ENCODE measurements at regions of chr12 and their contacts with region 1.

Region 1: GRCh38 chr12:54191550-54192022 is 2.8 kb upstream of the SMUG1 start:
- DNase-seq: peak; percentile 84
- H3K4me3 Mint-ChIP-seq: no peak overlapping the region
- H3K27ac Mint-ChIP-seq: no peak overlapping the region
- H3K4me1 Mint-ChIP-seq: peaks cover 25% of the 10 kb centered on the region
- H3K27me3 Mint-ChIP-seq: peaks cover 53% of the 10 kb centered on the region

Region 2: DNA sequence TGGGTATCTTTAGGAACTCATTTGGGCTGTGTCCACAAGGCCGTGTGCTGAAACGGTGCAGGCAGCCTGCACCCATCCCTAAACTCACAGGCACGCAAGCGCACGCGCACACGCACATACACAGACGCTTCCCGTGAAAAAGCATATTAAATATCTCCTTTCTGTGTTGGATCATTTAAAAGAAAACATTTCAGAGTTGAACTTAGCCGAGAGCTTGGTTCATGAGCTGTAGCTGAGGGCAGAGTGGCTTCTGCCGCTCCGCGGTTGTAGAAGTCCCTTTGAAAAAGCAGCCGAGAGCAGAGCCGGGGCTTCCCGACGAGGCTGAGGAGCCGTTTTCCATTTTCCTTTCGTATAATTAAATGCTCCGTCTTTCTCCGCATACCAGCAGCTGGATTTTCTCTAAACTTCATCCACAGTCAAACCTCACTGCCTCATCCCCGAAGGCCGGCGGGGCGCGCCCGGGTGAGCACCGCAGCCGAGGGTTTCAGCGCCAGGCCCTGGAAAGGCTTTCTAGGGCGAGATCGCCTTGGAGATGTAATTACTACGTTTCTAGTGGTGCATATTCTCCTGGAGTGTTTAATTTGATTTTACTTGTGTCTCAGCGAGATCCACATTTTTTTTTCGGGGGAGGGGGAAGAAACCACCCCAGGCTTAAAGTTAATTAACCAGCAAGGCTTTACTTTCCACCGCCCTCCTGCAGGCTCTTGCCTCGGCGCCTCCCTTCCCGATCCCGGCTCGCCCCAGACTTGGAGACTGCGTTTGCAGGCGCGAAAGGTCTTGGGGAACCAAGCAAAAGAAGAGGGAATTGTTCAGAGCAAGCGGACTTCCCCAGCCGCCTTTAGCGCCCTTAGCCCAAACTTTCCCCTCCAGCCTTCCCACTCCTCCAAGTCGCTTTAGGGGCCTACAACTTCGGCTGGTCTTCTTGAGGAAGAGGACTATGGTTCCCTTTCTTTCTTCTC is 255.9 kb before region 1 on chr12:
- CTCF ChIA-PET with region 1: no interaction called
- POLR2A ChIA-PET with region 1: no interaction called
- DNase-seq: no peak
- H3K4me3 Mint-ChIP-seq: no peak overlapping the region
- H3K27ac Mint-ChIP-seq: peak overlapping the region; percentile 36
- H3K4me1 Mint-ChIP-seq: no peaks in the 10 kb centered on the region
- H3K27me3 Mint-ChIP-seq: peaks cover 91% of the 10 kb centered on the region

Region 3: GRCh38 chr12:54207484-54208294 is 16.1 kb after region 1 on chr12:
- CTCF ChIA-PET with region 1: interaction called, 27 read pairs
- POLR2A ChIA-PET with region 1: no interaction called
- DNase-seq: peak; percentile 81
- H3K4me3 Mint-ChIP-seq: no peak overlapping the region
- H3K27ac Mint-ChIP-seq: peak overlapping the region; percentile 36
- H3K4me1 Mint-ChIP-seq: peaks cover 8% of the 10 kb centered on the region
- H3K27me3 Mint-ChIP-seq: peaks cover 39% of the 10 kb centered on the region

Region 4: GRCh38 chr12:54849441-54849840 is 657.9 kb after region 1 on chr12:
- CTCF ChIA-PET with region 1: no interaction called
- POLR2A ChIA-PET with region 1: no interaction called
- DNase-seq: no peak
- H3K4me3 Mint-ChIP-seq: no peak overlapping the region
- H3K27ac Mint-ChIP-seq: no peak overlapping the region
- H3K4me1 Mint-ChIP-seq: peaks cover 5% of the 10 kb centered on the region
- H3K27me3 Mint-ChIP-seq: peaks cover 7% of the 10 kb centered on the region